Right cardiac atrium (tissue), 5 donors: ENCODE measurements at regions of chr15 and their contacts with region 1.

Region 1: GRCh38 chr15:75639709-75640482 is at the start of gene IMP3:
- DNase-seq: peak; percentile 94 to 98 (median 97)
- ATAC-seq: peak; percentile 97 to 98
- H3K4me3 ChIP-seq: peak within 1 kb of the TSS; percentile 74
- H3K27ac ChIP-seq: peak within 1 kb of the TSS; percentile 97
- H3K4me1 ChIP-seq: peaks cover 3% of the 10 kb centered on the region
- H3K27me3 ChIP-seq: no peaks in the 10 kb centered on the region
- total RNA-seq, gene IMP3: 39.4 to 49.3 (median 46.8) TPM

Region 2: DNA sequence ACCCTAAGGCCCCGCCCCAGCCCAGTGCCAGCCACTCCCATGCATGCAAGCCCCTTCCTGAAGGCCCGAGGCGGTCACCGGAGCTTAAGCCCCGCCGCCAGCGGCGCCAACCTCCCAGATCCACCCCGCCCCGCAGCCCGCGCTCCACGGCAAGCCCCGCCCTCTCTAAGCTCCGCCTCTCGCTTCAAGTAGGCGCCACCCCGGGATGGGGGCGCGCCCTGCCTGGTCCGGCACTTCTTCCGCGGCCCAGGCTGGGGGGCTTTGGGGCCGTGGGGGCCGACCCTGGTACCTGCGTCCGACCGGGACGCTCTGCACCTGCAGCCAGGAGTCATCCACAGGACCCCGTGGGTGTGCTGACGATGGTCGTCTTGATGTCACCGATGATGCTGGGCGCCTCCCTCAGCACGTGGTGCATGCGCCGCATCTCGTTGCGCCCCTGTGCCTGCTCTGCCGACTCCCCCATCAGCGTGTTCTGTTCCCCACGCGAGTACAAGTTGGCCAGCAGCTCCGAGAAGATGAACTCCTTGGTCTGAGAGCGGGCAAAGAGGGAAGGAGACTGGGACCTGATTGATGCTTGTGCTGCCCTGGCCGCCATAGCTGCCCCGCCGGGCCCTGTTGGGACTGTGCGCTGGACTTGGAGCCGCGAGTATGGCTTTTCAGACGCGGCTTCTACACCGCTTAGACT is 98.9 kb after region 1 on chr15:
- intact Hi-C with region 1: loop called in 1 of 4 experiments (anchors 10 kb)
- DNase-seq: peak; percentile 96 to 98 (median 98)
- ATAC-seq: peak; percentile 98 to 99
- H3K4me3 ChIP-seq: peak overlapping the region; percentile 62
- H3K27ac ChIP-seq: no peak overlapping the region
- H3K4me1 ChIP-seq: no peaks in the 10 kb centered on the region
- H3K27me3 ChIP-seq: no peaks in the 10 kb centered on the region